ENCODE measurements at regions of chr17 and their contacts with region 1.

Region 1: GRCh38 chr17:77542551-77543490 is 402.1 kb downstream of the SEC14L1 start:
- DNase-seq: peak; percentile 76
- H3K4me3 ChIP-seq: no peak overlapping the region
- CTCF ChIP-seq: peak; percentile 99

Region 2: DNA sequence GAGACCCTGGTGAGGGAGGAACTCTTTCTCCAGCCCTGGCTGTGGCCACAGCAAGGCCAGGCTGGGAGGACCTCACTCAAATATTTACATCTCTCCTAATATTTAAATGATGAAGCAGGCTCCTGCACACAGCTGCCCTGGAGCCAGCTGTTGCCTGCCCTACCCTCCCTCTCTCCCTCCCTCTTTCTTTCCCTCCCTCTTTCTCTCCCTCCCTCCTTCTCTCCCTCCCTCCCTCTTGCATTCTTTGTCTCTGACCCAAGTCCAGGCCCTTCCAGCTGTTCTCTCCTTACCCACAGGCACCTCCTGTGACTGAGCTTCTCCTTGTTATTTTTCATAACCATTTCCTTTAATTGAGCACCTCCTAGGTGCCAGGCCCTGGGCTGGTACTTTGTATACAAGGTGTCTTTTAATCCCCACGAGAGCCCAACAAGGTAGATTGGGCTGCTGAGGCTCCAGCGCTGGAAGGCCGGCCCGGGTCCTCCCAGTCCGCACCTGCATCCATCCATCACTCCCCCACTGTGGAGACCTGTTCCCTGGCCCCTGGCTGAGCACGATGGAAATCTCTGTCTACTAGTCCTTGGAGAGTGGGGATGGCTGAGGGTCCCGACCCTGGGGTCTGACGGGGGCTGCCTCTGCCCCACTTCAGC is 159.7 kb before region 1 on chr17:
- in situ Hi-C with region 1: no loop called
- DNase-seq: no peak
- H3K4me3 ChIP-seq: no peak overlapping the region
- CTCF ChIP-seq: no peak

Region 3: DNA sequence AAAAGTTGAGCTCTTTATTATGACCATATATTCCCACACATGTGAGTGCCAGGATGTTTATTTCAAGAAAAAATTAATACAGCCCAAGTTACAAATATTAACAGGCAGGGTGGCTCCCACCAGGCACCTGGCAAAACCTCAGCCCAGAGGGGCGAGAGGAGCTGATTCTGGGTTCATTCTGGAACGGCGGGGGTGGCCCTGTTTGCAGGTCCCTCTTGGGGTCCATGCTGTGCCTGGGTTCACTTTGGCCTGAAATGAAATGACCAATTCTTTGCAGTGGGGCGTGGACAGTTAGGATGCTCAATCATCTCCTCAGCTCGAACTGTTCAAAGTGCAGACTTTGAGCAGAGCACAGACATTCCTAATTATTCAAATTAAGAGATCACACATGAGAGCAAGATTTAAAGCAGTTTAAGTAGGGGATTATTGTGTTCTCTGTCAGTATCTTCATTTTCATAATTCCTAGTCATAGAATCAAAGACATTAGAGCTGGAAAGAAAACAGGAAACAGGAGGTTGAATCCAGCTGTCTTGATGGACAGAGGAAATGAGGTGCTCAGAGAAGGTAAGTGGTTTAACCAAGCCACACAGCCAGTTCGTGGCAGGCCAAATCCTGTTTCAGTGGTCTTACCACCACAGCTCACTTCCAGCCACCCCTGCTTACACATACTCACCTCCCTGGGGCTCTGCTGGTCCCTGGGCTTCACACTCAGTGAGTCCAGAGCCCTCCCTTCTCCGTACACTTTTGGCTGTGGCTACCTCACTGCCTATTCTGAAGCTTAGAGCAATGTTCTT is 51.8 kb after region 1 on chr17:
- in situ Hi-C with region 1: loop called (anchors 5 kb)
- DNase-seq: no peak
- H3K4me3 ChIP-seq: no peak overlapping the region
- CTCF ChIP-seq: no peak

Region 4: GRCh38 chr17:77892469-77893143 is 349.8 kb after region 1 on chr17:
- in situ Hi-C with region 1: loop called (anchors 10 kb)
- DNase-seq: no peak
- H3K4me3 ChIP-seq: no peak overlapping the region
- CTCF ChIP-seq: peak; percentile 41

Region 5: GRCh38 chr17:78013683-78014467 is 471.1 kb after region 1 on chr17:
- in situ Hi-C with region 1: loop called (anchors 25 kb)
- DNase-seq: peak; percentile 77
- H3K4me3 ChIP-seq: no peak overlapping the region
- CTCF ChIP-seq: peak; percentile 75